ENCODE measurements at regions of chr1 and their contacts with region 1.

Region 1: DNA sequence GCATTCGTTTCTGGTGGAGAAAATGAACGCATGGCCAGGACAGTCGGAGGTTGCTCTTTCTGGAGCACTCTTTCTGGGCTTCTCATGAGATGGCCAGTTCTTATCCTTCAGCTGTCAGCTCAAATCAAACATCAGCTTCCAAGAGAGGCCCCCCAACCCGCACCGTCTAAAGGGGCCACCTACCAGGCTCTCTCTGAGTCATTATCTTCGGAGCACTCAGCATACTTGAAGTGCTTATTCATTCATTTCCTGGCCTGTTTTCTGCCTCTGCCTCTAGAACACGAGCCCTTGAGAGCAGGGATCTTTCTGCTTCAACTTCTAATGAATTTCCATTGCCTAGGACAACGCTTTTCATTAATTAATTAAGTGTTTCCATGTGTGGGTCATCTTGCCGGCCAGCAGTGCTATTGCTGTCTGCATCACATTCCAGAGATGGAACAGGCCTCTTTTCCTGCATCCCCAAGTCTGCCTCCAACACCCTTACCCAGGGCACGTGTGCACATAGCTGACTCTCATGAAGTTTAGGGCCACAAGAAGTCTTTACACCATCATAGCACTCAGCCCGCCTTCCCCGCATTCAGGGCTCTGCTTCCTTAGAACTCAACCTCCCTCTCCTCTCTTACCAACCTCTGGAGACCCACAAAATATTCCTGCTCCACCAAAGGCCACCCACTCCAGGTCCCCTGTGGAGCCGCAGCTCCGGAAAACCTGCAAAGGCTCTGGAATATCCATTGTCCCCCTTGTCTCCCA is 52.1 kb upstream of the LAPTM5 start:
- DNase-seq: peak; percentile 71
- H3K4me3 ChIP-seq: no peak overlapping the region
- H3K27ac ChIP-seq: peak overlapping the region; percentile 94
- H3K27me3 ChIP-seq: no peaks in the 10 kb centered on the region
- CTCF ChIP-seq: no peak

Region 2: GRCh38 chr1:30611741-30612309 is 197.9 kb before region 1 on chr1:
- CTCF ChIA-PET with region 1: no interaction called
- POLR2A ChIA-PET with region 1: no interaction called
- DNase-seq: no peak
- H3K4me3 ChIP-seq: no peak overlapping the region
- H3K27ac ChIP-seq: no peak overlapping the region
- H3K27me3 ChIP-seq: no peaks in the 10 kb centered on the region
- CTCF ChIP-seq: no peak

Region 3: DNA sequence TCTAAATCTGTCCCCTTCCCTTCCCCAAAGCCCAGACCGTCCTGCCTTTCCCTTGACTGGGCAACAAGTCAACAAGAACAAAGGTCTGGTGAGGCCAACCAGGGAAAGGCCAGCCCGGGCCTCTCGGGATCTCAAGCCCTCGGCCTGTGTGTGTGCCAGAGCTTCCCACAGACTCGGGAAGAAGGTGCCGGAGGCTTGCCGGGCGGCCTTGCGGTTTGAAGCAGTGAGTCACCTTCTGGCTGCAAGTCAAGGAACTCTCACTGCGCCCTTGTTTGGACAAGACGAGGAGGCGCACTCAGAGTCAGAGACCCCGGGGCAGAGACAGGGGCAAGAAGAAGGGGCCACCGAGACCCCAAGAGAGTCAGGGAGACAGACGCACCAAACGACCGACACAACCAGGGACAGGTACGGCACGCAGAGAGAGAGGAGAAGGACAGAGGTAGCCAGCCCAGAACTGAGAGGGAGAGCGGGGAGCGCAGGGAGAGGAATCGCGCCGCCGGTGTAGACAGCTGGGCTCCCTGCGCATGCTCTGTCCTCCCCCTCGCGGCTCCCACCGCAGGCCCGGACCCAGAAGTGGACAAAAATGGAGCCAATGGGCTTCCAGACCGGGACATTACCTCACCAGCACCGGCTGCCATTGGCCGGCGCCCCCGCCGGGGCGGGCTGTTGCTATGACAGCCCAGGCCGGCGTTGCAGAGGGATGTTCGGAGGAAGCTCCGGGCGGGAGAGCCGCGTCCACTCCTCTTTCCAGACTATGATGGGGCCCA is 14.5 kb after region 1 on chr1:
- CTCF ChIA-PET with region 1: no interaction called
- POLR2A ChIA-PET with region 1: interaction called, 27 read pairs
- DNase-seq: peak; percentile 99
- H3K4me3 ChIP-seq: peak overlapping the region; percentile 70
- H3K27ac ChIP-seq: peak overlapping the region; percentile 99
- H3K27me3 ChIP-seq: no peaks in the 10 kb centered on the region
- CTCF ChIP-seq: no peak